ENCODE measurements at regions of chr10 and their contacts with region 1.

Region 1: GRCh38 chr10:27241652-27242472 is 1.3 kb upstream of the ACBD5 start:
- DNase-seq: peak; percentile 91
- ATAC-seq: peak; percentile 60
- H3K4me3 Mint-ChIP-seq: peak overlapping the region; percentile 93
- H3K27ac Mint-ChIP-seq: peak overlapping the region; percentile 99
- H3K4me1 Mint-ChIP-seq: peaks cover 25% of the 10 kb centered on the region
- H3K27me3 Mint-ChIP-seq: no peaks in the 10 kb centered on the region

Region 2: GRCh38 chr10:27155066-27155754 is 86.7 kb before region 1 on chr10 and contains the start of gene MASTL:
- CTCF ChIA-PET with region 1: interaction called, 4 read pairs
- POLR2A ChIA-PET with region 1: interaction called, 71 read pairs
- DNase-seq: peak; percentile 95
- ATAC-seq: peak; percentile 80
- H3K4me3 Mint-ChIP-seq: peak within 1 kb of the TSS; percentile 99
- H3K27ac Mint-ChIP-seq: peak within 1 kb of the TSS; percentile 100
- H3K4me1 Mint-ChIP-seq: peaks cover 43% of the 10 kb centered on the region
- H3K27me3 Mint-ChIP-seq: no peaks in the 10 kb centered on the region
- total RNA-seq, gene MASTL: 40.1 to 40.7 TPM

Region 3: DNA sequence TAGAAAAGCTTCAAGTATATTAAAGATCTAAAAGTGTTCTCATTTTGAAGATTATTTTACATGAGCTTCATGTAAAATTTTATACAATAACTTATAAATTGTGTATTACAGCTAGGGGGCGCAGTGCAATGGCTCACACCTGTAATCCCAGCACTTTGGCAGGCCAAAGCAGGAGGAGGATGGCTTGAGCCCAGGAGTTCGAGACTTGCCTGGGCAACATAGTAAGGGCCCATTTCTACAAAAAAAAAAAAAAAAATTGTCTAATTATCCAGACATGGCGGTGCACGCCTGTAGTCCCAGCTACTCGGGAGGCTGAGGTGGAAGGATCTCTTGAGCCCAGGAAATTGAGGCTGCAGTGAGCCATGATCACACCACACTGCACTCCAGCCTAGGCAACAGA is 17.9 kb before region 1 on chr10:
- CTCF ChIA-PET with region 1: interaction called, 22 read pairs
- POLR2A ChIA-PET with region 1: interaction called, 6 read pairs
- DNase-seq: peak; percentile 51
- ATAC-seq: no peak
- H3K4me3 Mint-ChIP-seq: no peak overlapping the region
- H3K27ac Mint-ChIP-seq: peak overlapping the region; percentile 52
- H3K4me1 Mint-ChIP-seq: peaks cover 26% of the 10 kb centered on the region
- H3K27me3 Mint-ChIP-seq: no peaks in the 10 kb centered on the region

Region 4: GRCh38 chr10:27252267-27253000 is 10.6 kb after region 1 on chr10:
- CTCF ChIA-PET with region 1: interaction called, 18 read pairs
- POLR2A ChIA-PET with region 1: interaction called, 37 read pairs
- DNase-seq: peak; percentile 77
- ATAC-seq: peak; percentile 88
- H3K4me3 Mint-ChIP-seq: peak overlapping the region; percentile 75
- H3K27ac Mint-ChIP-seq: peak overlapping the region; percentile 88
- H3K4me1 Mint-ChIP-seq: peaks cover 17% of the 10 kb centered on the region
- H3K27me3 Mint-ChIP-seq: peaks cover 6% of the 10 kb centered on the region

Measured in activated CD8-positive, alpha-beta T cell treated with anti-CD3 and anti-CD28 coated beads, Interleukin-2, amount 10 ng/mL, durations not matched to agents 7 days and 5 days (primary cell).